Vagina (tissue), 2 donors: ENCODE measurements at regions of chr6 and their contacts with region 1.

Region 1: GRCh38 chr6:72316675-72317380 is 305.0 kb upstream of the KCNQ5 start:
- DNase-seq: no peak
- H3K4me3 ChIP-seq: no peak overlapping the region
- H3K27ac ChIP-seq: no peak overlapping the region
- H3K4me1 ChIP-seq: no peaks in the 10 kb centered on the region
- H3K27me3 ChIP-seq: no peaks in the 10 kb centered on the region
- CTCF ChIP-seq: no peak
- POLR2A ChIP-seq: no peak

Region 2: DNA sequence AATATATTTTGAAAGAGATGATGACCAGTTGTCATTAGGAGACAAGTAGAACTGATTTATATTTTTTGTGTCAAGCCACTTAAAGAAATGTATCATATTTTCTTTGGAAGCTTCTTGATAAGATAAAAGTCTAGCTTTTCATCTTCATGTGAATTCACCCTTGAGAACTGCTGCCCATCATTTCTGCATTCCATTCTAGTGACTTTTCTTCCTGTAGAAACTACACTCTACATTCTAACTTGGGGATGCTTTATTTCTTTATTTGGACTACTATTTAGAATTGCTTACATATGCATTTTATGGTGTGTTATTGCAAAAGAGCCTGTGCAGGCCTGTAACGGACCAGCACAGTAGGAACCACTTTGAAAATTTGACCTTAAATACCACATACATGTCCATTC is 29.9 kb before region 1 on chr6:
- intact Hi-C with region 1: loop called (anchors 1 kb)
- DNase-seq: no peak
- H3K4me3 ChIP-seq: no peak overlapping the region
- H3K27ac ChIP-seq: no peak overlapping the region
- H3K4me1 ChIP-seq: no peaks in the 10 kb centered on the region
- H3K27me3 ChIP-seq: no peaks in the 10 kb centered on the region
- CTCF ChIP-seq: no peak
- POLR2A ChIP-seq: no peak